HepG2 (cell line): ENCODE measurements at regions of chr9 and their contacts with region 1.

Region 1: GRCh38 chr9:4366591-4367330 is 66.9 kb upstream of the GLIS3 start:
- DNase-seq: peak; percentile 10
- ATAC-seq: peak; percentile 52; the same call in 2 of the 3 replicates
- H3K4me3 ChIP-seq: no peak overlapping the region
- H3K27ac ChIP-seq: no peak overlapping the region
- H3K4me1 ChIP-seq: no peaks in the 10 kb centered on the region
- H3K27me3 ChIP-seq: no peaks in the 10 kb centered on the region
- CTCF ChIP-seq: peak; percentile 71
- EP300 ChIP-seq: 0 out of 4 replicates have a peak, but pooled peaks of 1 of the 2 experiments have one; percentile 14
- POLR2A ChIP-seq: no peak
- RAD21 ChIP-seq: peak; percentile 51; the same call in 1 of the 2 replicates

Region 2: GRCh38 chr9:4297151-4297785 is 69.5 kb before region 1 on chr9:
- CTCF ChIA-PET with region 1: no interaction called
- POLR2A ChIA-PET with region 1: no interaction called
- in situ Hi-C with region 1: no loop called
- intact Hi-C with region 1: loop called (anchors 1 kb)
- DNase-seq: peak; percentile 57
- ATAC-seq: peak; percentile 78
- H3K4me3 ChIP-seq: peak overlapping the region; percentile 67 to 79 (median 69)
- H3K27ac ChIP-seq: no peak overlapping the region
- H3K4me1 ChIP-seq: peaks cover 21% of the 10 kb centered on the region
- H3K27me3 ChIP-seq: peaks cover 10 to 24% of the 10 kb centered on the region in 2 experiments; a peak in 4 of 5 replicates
- CTCF ChIP-seq: peak; percentile 60
- EP300 ChIP-seq: no peak
- POLR2A ChIP-seq: no peak
- RAD21 ChIP-seq: peak; percentile 37; the same call in 1 of the 2 replicates

Region 3: DNA sequence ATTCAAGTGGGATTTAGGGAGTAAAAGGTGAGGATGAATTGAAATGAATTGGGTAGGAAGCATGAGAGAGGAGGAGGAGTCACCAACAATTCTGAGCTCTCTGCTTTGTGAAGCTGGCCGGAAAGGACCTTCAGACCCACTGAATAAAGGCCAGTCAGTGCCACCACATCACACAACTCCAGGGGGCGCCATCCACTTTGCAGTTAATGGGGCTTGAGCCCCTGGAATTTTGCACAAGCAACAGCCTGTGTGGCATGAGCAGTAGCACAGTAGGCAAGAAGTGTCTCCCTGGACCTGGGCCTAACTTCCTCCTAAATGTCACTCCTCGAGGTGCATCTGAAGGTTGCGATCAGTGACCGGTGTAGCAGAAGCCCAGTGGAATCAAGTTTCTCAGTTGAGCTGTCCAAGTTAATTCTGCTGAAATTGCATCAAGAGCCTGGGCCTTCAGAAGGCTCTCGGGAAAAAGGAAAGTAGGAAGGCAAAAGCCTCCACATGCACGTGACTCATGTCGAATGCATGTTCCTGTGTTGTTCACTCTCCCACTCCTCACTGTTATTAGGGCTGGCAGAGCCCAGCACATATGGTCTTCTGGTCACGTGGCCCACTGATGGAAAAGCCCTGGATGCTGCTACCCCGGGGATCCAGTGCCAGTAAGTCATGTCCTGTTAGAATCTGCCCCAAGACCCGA is 39.1 kb before region 1 on chr9:
- CTCF ChIA-PET with region 1: no interaction called
- POLR2A ChIA-PET with region 1: no interaction called
- in situ Hi-C with region 1: no loop called
- intact Hi-C with region 1: no loop called
- DNase-seq: no peak
- ATAC-seq: no peak
- H3K4me3 ChIP-seq: no peak overlapping the region
- H3K27ac ChIP-seq: no peak overlapping the region
- H3K4me1 ChIP-seq: no peaks in the 10 kb centered on the region
- H3K27me3 ChIP-seq: no peaks in the 10 kb centered on the region
- CTCF ChIP-seq: 0 out of 2 replicates have a peak, but pooled peaks have one; percentile 17
- EP300 ChIP-seq: no peak
- POLR2A ChIP-seq: no peak
- RAD21 ChIP-seq: no peak